Activated naive CD8-positive, alpha-beta T cell treated with anti-CD3 and anti-CD28 coated beads, Interleukin-2, amount 10 ng/mL, durations not matched to agents 7 days and 5 days (primary cell): ENCODE measurements at regions of chr10 and their contacts with region 1.

Region 1: DNA sequence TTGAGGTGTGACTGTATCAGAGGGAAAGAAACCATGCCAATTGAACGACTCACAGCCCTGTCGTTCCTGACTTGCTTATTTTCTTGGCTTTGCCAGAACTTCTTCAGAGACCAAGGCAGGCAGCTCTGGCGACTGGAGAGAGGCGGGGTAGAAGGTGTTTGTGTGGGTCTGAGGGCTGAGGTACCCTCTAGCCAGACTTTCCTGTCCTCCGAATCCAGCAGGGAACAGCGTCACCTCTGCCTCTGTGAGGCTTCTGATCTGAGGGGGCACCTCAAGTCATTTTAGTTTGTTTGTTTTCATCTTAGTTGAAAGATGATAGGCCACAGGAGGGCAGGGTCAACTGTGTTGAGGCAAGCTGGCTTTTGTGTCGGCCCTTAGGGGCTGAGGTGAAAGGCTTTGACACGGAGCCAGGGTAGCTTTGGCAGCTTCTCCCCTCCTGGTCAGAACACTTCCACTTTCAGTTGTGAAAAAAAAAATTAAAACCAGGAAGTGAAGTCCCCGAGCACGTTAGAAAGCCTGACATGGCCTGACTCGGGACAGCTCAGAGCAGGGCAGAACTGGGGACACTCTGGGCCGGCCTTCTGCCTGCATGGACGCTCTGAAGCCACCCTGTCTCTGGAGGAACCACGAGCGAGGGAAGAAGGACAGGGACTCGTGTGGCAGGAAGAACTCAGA is 1.9 kb downstream of the ACSL5 start:
- DNase-seq: peak; percentile 61
- ATAC-seq: peak; percentile 86
- H3K4me3 Mint-ChIP-seq: peak overlapping the region; percentile 98
- H3K27ac Mint-ChIP-seq: peak overlapping the region; percentile 100
- H3K4me1 Mint-ChIP-seq: peaks cover 59% of the 10 kb centered on the region
- H3K27me3 Mint-ChIP-seq: no peaks in the 10 kb centered on the region

Region 2: DNA sequence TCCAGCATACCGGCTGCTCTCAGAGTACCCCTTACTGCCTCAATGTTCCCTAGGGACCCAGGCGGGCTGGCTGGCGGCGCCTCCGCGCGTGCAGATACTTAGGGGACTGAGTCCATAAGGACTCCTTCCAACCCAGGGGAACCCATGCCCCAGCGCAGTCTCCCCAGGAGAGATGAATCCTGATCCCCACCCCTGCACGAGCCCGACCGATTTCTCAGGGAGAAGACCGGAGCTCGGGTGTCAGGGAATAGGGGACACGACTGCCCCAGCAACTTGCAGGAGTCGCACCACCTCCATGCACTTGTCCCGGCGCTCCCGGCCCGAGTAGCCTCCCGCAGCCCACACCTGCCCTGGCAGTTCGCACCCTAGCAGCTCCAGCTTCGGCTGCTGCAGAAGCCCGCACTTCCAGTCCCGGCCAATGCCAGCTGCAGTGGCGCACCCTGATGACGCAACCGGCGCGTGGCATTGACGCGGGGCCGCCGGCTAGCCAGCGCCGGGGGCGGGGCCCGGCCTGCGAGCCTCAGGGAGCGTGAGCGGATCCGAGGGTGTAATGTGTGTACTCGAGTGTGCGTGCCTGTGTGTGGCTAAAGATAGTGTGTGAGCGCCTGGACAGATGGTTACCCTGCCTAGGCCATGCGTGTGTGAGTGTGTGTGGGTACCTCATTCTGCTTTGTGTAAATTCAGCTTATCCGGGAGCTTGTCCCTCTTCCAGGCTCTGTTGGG is 192.4 kb before region 1 on chr10 and contains the start of gene GPAM:
- POLR2A ChIA-PET with region 1: interaction called, 15 read pairs
- DNase-seq: peak; percentile 100
- ATAC-seq: peak; percentile 97
- H3K4me3 Mint-ChIP-seq: peak within 1 kb of the TSS; percentile 97
- H3K27ac Mint-ChIP-seq: peak within 1 kb of the TSS; percentile 96
- H3K4me1 Mint-ChIP-seq: peaks cover 16% of the 10 kb centered on the region
- H3K27me3 Mint-ChIP-seq: peaks cover 14% of the 10 kb centered on the region
- total RNA-seq, gene GPAM: 7.5 to 7.8 TPM

Region 3: DNA sequence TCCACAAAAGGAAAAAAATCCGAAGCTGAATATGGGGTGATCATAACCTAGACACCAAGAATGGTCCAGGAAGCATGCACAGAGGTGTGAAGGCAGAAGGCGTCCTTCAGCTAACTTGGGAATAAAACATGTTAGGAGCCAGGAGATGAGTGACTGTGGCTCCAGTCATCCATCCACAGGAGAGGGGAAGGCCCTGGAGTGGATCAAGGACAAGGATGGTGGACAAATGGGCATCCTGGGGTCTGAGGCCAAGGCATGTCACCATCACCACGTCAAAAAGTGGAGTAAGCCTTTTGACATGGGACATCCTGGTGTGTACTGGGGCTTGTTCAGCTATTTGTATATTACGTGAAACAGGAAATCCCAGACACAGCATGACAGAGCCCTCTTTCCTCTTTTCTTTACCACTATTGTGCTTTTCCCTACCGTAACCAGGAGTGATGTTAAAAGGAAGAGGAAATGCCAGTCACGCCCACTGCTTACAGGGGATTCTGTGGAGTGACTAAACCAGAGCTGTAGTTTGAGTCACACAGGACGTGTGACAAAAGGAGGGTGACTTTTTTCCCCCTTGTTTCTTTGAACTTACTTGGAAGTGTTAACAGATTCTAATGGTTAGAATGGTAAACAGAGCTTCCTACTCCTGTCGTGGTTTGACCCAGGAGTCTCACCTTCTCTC is 13.4 kb after region 1 on chr10:
- POLR2A ChIA-PET with region 1: interaction called, 18 read pairs
- DNase-seq: no peak
- ATAC-seq: peak; percentile 86
- H3K4me3 Mint-ChIP-seq: peak overlapping the region; percentile 9
- H3K27ac Mint-ChIP-seq: peak overlapping the region; percentile 65
- H3K4me1 Mint-ChIP-seq: peaks cover 26% of the 10 kb centered on the region
- H3K27me3 Mint-ChIP-seq: no peaks in the 10 kb centered on the region

Region 4: GRCh38 chr10:112446855-112447711 is 71.2 kb after region 1 on chr10 and contains the starts of genes VTI1A and ZDHHC6:
- POLR2A ChIA-PET with region 1: interaction called, 21 read pairs
- DNase-seq: peak; percentile 86
- ATAC-seq: peak; percentile 92
- H3K4me3 Mint-ChIP-seq: peak within 1 kb of the TSS; percentile 100
- H3K27ac Mint-ChIP-seq: peak within 1 kb of the TSS; percentile 99
- H3K4me1 Mint-ChIP-seq: peaks cover 36% of the 10 kb centered on the region
- H3K27me3 Mint-ChIP-seq: no peaks in the 10 kb centered on the region
- total RNA-seq, gene VTI1A: 43.2 to 45.1 TPM
- total RNA-seq, gene ZDHHC6: 48.1 to 51.8 TPM